ENCODE measurements at regions of chr10 and their contacts with region 1.

Region 1: DNA sequence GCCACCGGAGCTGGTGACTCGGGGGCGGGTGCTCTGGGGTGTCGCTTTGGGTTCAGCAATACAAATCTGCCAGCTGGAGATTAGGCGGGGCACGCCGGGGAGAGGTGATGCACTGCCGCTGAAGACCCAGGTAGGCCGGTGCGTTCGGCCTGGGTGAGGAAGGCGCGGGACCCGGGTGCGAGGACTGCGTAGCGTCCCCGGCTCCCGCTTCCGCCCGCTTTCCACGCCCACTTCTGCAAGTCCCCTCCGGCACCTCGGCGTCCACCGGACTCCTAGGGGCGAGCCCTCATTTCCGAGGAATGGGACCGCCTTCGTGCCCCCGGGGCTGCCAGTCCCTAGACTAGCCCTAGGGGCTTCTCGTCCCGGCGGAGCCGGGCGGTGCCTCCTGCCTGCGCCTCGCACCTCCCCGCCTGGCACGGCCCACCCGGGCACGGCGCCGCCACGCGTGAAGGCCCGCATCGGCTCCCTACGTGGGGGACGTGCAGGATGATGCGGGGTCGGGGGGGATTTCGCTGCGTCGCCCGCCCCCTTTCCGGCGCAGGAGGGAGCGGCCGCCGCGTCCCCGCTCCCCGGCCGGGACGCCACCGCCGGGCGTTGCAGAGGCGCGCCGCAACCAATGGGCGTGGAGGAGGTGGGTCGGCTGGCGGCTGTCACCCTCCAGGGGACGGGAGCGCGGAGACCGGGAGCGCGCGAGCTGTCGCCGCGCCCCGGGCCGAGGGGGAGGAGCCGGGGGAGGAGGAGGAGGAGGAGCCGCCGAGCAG is 40.0 kb downstream of the HK1 start:
- DNase-seq: peak; percentile 91
- H3K4me3 Mint-ChIP-seq: peak overlapping the region; percentile 99
- H3K27ac Mint-ChIP-seq: peak overlapping the region; percentile 98
- H3K4me1 Mint-ChIP-seq: peaks cover 50% of the 10 kb centered on the region
- H3K27me3 Mint-ChIP-seq: peaks cover 8% of the 10 kb centered on the region

Region 2: DNA sequence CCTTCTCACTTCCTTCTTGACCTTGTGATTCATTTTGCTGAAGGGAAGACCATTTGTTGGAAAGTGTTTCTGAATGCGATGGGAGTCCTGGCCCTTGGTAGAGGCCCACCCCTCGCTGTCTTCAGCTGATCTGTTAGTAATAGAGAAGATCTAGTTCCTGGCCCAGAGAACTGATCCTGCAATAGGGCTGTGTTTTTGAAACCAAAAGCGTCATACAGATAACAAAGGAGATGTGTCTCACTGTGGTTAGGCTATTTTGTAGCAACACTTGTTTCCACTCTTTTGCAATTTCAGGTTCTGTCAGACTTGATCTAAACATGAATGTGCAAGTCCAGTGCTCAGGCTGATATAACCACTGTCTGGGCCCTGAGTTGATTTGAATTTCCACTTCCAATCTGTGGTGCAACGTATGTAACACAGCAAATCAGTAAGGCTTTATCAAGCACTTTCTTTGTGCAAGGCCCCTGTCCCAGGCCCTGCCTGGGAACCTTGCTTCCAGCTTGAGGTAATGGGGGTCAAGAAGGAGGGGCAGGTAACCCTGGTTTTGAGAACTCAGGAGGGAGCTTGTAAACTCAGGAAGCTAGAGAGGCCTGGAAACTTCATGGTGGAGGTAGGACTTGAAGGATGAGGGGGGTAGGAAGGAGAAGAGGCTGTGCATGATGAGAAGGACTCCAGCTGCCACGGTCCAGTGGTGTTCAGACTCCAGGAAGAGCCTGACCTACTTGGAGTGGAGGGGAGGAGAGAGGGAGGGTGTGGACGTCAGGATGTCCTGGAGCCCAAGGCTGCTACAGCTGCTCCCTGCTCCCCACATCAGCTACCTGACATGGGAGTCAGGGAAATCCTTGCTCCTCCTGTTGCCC is 272.6 kb before region 1 on chr10:
- intact Hi-C with region 1: loop called (anchors 5 kb)
- DNase-seq: peak; percentile 42
- H3K4me3 Mint-ChIP-seq: peak overlapping the region; percentile 76
- H3K27ac Mint-ChIP-seq: peak overlapping the region; percentile 99
- H3K4me1 Mint-ChIP-seq: peaks cover 54% of the 10 kb centered on the region
- H3K27me3 Mint-ChIP-seq: no peaks in the 10 kb centered on the region

Region 3: DNA sequence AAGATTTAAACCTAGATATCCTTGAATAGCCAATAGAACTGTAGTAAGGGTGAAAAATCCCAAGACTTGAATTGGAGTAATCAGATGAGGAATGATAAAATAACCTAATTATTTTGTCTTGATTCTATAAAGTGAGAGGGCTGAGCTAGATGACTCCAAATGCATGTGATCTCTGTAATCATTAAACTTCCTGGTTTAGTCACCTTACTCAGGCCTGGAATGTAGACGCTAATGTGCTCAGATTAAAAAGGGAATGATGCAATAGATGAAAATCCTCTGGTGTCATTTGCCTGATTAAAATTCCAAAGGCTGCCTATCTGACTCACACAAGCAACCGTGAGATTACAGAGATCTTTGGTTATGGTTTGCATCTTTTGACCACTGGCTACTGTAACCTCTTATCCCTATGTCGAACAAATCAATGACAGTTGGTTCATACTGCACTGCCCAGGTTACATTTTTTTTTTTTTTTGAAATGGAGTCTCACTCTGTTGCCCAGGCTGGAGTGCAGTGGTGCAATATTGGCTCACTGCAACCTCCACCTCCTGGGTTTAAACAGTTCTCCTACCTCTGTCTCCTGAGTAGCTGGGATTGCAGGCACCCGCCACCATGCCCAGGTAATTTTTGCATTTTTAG is 101.0 kb before region 1 on chr10:
- intact Hi-C with region 1: no loop called
- DNase-seq: no peak
- H3K4me3 Mint-ChIP-seq: no peak overlapping the region
- H3K27ac Mint-ChIP-seq: no peak overlapping the region
- H3K4me1 Mint-ChIP-seq: peaks cover 48% of the 10 kb centered on the region
- H3K27me3 Mint-ChIP-seq: no peaks in the 10 kb centered on the region

Region 4: DNA sequence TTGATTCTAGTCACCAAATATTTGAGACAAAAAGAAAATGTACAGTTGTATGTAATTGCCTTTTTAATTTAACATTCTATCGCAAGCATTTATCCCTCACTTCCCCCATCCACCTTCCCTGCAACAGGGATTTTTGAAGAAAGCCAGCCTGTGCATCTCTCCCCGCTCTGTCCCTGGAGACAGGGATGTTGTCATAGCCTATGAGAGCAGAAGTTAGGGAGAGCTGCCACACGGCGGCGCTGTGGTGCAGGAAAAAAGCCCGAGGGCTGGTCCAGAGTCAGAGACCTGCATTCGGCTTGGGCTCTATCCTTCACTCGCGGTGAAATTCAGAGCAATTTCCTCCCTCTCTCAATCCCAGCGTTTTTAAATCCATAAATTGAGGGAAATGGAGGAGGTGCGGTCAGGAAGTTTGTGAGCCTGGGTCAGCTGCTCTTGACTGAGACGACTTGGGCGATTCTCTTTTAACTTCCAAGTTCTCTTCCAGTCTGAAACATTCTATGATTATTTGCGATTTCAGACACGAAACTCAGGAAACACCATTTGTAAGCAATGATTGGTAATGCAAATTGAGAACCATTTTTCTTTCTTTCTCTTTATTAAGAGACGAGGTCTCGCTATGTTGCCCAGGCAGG is 80.6 kb before region 1 on chr10:
- intact Hi-C with region 1: loop called (anchors 1 kb)
- DNase-seq: peak; percentile 78
- H3K4me3 Mint-ChIP-seq: no peak overlapping the region
- H3K27ac Mint-ChIP-seq: no peak overlapping the region
- H3K4me1 Mint-ChIP-seq: peaks cover 15% of the 10 kb centered on the region
- H3K27me3 Mint-ChIP-seq: peaks cover 2% of the 10 kb centered on the region

Region 5: DNA sequence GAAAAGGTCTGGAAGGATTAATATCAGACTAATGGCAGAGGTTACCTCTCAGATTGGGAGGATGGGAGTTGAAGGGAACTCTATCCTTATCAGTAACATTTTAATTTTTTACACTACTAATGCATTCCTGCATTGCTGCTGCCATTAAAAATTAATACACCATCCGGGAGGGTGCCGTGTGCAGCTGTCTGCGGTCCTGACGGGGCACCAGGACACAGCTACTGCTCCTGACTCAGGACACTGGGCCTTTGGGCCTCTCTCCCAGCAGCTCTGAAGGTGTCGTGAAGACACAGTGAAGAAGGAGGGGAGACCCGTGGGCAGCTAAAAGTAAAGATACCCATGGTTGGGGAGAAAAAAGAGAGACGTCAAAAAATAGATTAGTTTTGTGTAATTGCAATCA is 63.4 kb before region 1 on chr10:
- intact Hi-C with region 1: no loop called
- DNase-seq: no peak
- H3K4me3 Mint-ChIP-seq: no peak overlapping the region
- H3K27ac Mint-ChIP-seq: no peak overlapping the region
- H3K4me1 Mint-ChIP-seq: no peaks in the 10 kb centered on the region
- H3K27me3 Mint-ChIP-seq: no peaks in the 10 kb centered on the region

Region 6: DNA sequence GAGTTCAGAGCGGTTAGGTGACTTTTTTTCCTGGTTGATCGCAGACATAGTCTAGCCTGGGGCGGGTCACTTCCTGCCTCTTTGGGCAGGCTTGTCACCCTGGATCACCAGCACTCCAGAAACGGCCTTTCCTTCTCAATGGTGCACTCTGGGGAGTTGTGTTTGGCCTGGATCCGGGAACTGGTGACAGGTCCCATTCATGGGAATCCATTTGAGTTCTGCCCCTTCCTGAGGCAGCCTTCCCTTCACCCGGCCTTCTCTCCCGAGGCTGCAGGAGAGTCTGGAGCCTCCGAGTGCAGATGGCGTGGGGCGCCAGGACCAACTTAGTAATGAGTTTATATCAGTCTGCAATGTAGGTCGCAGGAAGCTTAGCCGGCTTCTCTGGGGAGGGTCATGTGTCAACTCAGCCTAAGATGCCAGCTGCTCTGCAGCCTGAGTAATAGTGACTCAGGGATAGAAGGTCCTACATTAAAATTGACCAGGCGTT is 44.2 kb after region 1 on chr10:
- intact Hi-C with region 1: loop called (anchors 2 kb)
- DNase-seq: no peak
- H3K4me3 Mint-ChIP-seq: no peak overlapping the region
- H3K27ac Mint-ChIP-seq: peak overlapping the region; percentile 40
- H3K4me1 Mint-ChIP-seq: peaks cover 64% of the 10 kb centered on the region
- H3K27me3 Mint-ChIP-seq: no peaks in the 10 kb centered on the region

Region 7: DNA sequence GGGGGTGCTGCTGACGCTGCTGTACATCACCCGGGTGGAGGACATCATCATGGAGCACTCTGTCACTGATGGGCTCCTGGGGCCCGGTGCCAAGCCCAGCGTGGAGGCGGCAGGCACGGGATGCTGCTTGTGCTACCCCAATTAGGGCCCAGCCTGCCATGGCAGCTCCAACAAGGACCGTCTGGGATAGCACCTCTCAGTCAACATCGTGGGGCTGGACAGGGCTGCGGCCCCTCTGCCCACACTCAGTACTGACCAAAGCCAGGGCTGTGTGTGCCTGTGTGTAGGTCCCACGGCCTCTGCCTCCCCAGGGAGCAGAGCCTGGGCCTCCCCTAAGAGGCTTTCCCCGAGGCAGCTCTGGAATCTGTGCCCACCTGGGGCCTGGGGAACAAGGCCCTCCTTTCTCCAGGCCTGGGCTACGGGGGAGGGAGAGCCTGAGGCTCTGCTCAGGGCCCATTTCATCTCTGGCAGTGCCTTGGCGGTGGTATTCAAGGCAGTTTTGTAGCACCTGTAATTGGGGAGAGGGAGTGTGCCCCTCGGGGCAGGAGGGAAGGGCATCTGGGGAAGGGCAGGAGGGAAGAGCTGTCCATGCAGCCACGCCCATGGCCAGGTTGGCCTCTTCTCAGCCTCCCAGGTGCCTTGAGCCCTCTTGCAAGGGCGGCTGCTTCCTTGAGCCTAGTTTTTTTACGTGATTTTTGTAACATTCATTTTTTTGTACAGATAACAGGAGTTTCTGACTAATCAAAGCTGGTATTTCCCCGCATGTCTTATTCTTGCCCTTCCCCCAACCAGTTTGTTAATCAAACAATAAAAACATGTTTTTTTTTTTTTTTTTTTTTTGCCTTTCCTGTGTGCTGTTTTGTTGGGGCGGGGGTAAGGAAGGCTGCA is 188.8 kb after region 1 on chr10:
- intact Hi-C with region 1: loop called (anchors 1 kb)
- DNase-seq: no peak
- H3K4me3 Mint-ChIP-seq: peak overlapping the region; percentile 42
- H3K27ac Mint-ChIP-seq: peak overlapping the region; percentile 50
- H3K4me1 Mint-ChIP-seq: peaks cover 9% of the 10 kb centered on the region
- H3K27me3 Mint-ChIP-seq: peaks cover 21% of the 10 kb centered on the region